CD4-positive, alpha-beta memory T cell (primary cell): ENCODE measurements at regions of chr19 and their contacts with region 1.

Region 1: DNA sequence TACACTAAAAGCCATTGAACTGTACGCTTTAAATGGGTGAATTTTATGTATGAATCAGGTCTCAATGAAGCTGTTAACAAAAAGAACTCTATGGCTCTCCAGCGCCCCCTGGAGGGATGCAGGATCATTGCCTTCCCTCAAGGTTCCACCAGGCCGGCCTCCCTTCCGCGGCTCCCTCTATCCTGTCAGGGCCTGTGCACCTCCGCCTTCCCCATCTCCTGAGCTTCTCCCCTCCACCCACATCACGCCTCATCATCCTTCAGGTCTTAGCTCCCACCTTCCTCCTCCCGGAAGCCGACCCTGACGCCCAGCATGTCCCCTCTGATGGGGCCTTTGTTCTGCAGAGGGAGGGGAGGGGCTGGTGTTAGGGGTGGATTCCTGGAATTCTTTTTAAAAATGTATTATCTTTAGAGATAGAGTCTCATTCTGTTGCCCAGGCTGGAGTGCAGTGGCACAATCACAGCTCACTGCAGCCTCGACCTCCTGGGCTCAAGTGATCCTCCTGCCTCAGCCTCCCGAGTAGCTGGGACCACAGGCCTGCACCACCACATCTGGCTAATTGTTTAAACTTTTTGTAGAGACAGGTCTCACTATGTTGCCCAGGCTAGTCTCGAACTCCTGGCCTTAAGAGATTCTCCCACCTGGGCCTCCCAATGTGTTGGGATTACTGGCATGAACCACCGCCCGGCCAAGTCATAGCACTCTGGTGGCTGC is 27.7 kb downstream of the MEIS3 start:
- DNase-seq: peak; percentile 74 to 76 (median 75)
- H3K4me3 ChIP-seq: no peak overlapping the region
- H3K4me3 Mint-ChIP-seq: no peak overlapping the region
- H3K27ac ChIP-seq: no peak overlapping the region
- H3K27ac Mint-ChIP-seq: peak overlapping the region in 1 of 7 donors; percentile 30
- H3K4me1 ChIP-seq: no peaks in the 10 kb centered on the region
- H3K4me1 Mint-ChIP-seq: peaks cover 0 to 5% (median 3%) of the 10 kb centered on the region in 4 donors
- H3K27me3 ChIP-seq: no peaks in the 10 kb centered on the region
- H3K27me3 Mint-ChIP-seq: peaks cover 7 to 9% of the 10 kb centered on the region in 2 donors

Region 2: DNA sequence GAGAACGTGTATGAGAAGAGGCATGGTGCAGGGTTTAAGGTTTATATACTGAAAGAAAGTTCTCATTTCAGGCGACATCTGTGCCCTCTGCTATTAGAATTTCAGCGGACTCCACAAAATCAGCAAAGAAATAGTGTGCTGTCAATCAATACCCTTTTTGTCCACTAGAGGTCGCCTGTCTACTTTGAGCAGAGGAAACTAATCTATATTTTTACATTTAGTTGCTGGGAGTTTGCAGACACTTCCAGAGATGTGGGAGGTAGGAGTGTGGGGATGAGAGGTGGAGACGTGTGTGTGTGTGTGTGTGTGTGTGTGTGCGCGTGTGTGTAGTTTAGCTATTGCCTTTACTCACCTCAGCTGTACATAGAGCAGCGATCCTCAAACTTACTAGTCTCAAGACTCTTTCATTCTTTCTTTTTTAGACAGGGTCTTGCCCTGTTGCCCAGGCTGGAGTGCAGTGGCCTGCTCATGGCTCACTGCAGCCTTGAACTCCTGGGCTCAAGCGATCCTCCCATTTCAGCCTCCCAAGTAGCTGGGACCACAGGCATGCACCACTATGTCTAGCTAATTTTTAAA is 107.3 kb before region 1 on chr19:
- CTCF ChIA-PET with region 1: interaction called, 9 read pairs
- POLR2A ChIA-PET with region 1: no interaction called
- intact Hi-C with region 1: loop called (anchors 5 kb)
- DNase-seq: peak in 4 of 5 donors; percentile 54 to 69 (median 64)
- H3K4me3 ChIP-seq: no peak overlapping the region
- H3K4me3 Mint-ChIP-seq: no peak overlapping the region
- H3K27ac ChIP-seq: no peak overlapping the region
- H3K27ac Mint-ChIP-seq: no peak overlapping the region
- H3K4me1 ChIP-seq: peaks cover 10% of the 10 kb centered on the region
- H3K4me1 Mint-ChIP-seq: peaks cover 7 to 16% (median 12%) of the 10 kb centered on the region in 4 donors
- H3K27me3 ChIP-seq: no peaks in the 10 kb centered on the region
- H3K27me3 Mint-ChIP-seq: no peaks in the 10 kb centered on the region

Region 3: GRCh38 chr19:47296036-47296435 is 95.6 kb before region 1 on chr19:
- CTCF ChIA-PET with region 1: interaction called, 96 read pairs
- POLR2A ChIA-PET with region 1: interaction called, 3 read pairs
- intact Hi-C with region 1: loop called (anchors 1 kb)
- DNase-seq: peak; percentile 75 to 80 (median 77)
- H3K4me3 ChIP-seq: no peak overlapping the region
- H3K4me3 Mint-ChIP-seq: no peak overlapping the region
- H3K27ac ChIP-seq: no peak overlapping the region
- H3K27ac Mint-ChIP-seq: no peak overlapping the region
- H3K4me1 ChIP-seq: peaks cover 5% of the 10 kb centered on the region
- H3K4me1 Mint-ChIP-seq: peaks cover 2 to 9% (median 4%) of the 10 kb centered on the region in 4 donors
- H3K27me3 ChIP-seq: no peaks in the 10 kb centered on the region
- H3K27me3 Mint-ChIP-seq: no peaks in the 10 kb centered on the region

Region 4: GRCh38 chr19:47309608-47310007 is 82.1 kb before region 1 on chr19 and contains the start of gene C5AR1:
- CTCF ChIA-PET with region 1: interaction called, 11 read pairs
- POLR2A ChIA-PET with region 1: no interaction called
- intact Hi-C with region 1: no loop called
- DNase-seq: no peak
- H3K4me3 ChIP-seq: no peak within 1 kb of the TSS
- H3K4me3 Mint-ChIP-seq: no peak within 1 kb of the TSS
- H3K27ac ChIP-seq: no peak within 1 kb of the TSS
- H3K27ac Mint-ChIP-seq: no peak within 1 kb of the TSS
- H3K4me1 ChIP-seq: no peaks in the 10 kb centered on the region
- H3K4me1 Mint-ChIP-seq: peaks cover 3 to 6% (median 5%) of the 10 kb centered on the region in 4 donors
- H3K27me3 ChIP-seq: no peaks in the 10 kb centered on the region
- H3K27me3 Mint-ChIP-seq: peaks cover 8 to 11% of the 10 kb centered on the region in 2 donors
- total RNA-seq, gene C5AR1: 4.1 to 4.6 TPM

Region 5: GRCh38 chr19:47336853-47337279 is 54.8 kb before region 1 on chr19:
- CTCF ChIA-PET with region 1: interaction called, 10 read pairs
- POLR2A ChIA-PET with region 1: no interaction called
- intact Hi-C with region 1: no loop called
- DNase-seq: peak in 3 of 5 donors; percentile 13 to 36 (median 35)
- H3K4me3 ChIP-seq: no peak overlapping the region
- H3K4me3 Mint-ChIP-seq: peak overlapping the region in 7 of 8 donors; percentile 28 to 72 (median 68)
- H3K27ac ChIP-seq: no peak overlapping the region
- H3K27ac Mint-ChIP-seq: peak overlapping the region in 5 of 7 donors; percentile 48 to 95 (median 86)
- H3K4me1 ChIP-seq: peaks cover 20% of the 10 kb centered on the region
- H3K4me1 Mint-ChIP-seq: peaks cover 8 to 27% (median 16%) of the 10 kb centered on the region in 4 donors
- H3K27me3 ChIP-seq: no peaks in the 10 kb centered on the region
- H3K27me3 Mint-ChIP-seq: no peaks in the 10 kb centered on the region

Region 6: GRCh38 chr19:47494729-47495128 is 103.1 kb after region 1 on chr19:
- CTCF ChIA-PET with region 1: no interaction called
- POLR2A ChIA-PET with region 1: no interaction called
- intact Hi-C with region 1: no loop called
- DNase-seq: peak in 1 of 5 donors; percentile 4
- H3K4me3 ChIP-seq: no peak overlapping the region
- H3K4me3 Mint-ChIP-seq: no peak overlapping the region
- H3K27ac ChIP-seq: no peak overlapping the region
- H3K27ac Mint-ChIP-seq: peak overlapping the region in 1 of 7 donors; percentile 55
- H3K4me1 ChIP-seq: no peaks in the 10 kb centered on the region
- H3K4me1 Mint-ChIP-seq: peaks cover 0 to 8% (median 2%) of the 10 kb centered on the region in 4 donors
- H3K27me3 ChIP-seq: no peaks in the 10 kb centered on the region
- H3K27me3 Mint-ChIP-seq: no peaks in the 10 kb centered on the region